Natural killer cell (primary cell): ENCODE measurements at regions of chr21 and their contacts with region 1.

Region 1: GRCh38 chr21:22791986-22792560 is 1793.9 kb downstream of the NCAM2 start:
- DNase-seq: peak in 1 of 2 donors; percentile 60
- ATAC-seq: no peak
- H3K4me3 ChIP-seq: no peak overlapping the region
- H3K4me3 Mint-ChIP-seq: no peak overlapping the region
- H3K27ac ChIP-seq: no peak overlapping the region
- H3K27ac Mint-ChIP-seq: no peak overlapping the region
- H3K4me1 ChIP-seq: no peaks in the 10 kb centered on the region
- H3K4me1 Mint-ChIP-seq: no peaks in the 10 kb centered on the region
- H3K27me3 ChIP-seq: no peaks in the 10 kb centered on the region
- H3K27me3 Mint-ChIP-seq: no peaks in the 10 kb centered on the region
- CTCF ChIP-seq: peak; percentile 66

Region 2: DNA sequence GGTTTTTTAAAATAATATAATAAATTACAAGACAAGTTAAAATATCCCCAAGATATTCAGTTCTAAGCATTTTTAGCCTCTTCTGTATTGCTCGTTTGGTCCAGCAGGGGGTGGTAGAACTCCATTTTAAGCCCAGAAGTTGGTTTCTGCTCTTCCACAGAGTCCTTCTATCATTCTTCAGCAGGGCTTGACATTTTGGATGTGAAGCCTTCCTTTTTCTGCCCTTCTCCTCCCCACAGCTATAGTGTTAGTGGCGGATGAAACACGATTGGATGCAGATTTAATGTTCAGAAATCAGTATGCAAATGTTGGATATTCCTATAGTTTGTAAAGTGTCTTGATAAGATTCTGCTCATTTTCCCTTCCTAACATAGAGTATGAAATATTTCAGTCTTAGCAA is 1792.4 kb before region 1 on chr21:
- intact Hi-C with region 1: loop called (anchors 2 kb)
- DNase-seq: peak; percentile 20 to 45
- ATAC-seq: peak in 1 of 3 donors; percentile 30
- H3K4me3 ChIP-seq: no peak overlapping the region
- H3K4me3 Mint-ChIP-seq: peak overlapping the region; percentile 58
- H3K27ac ChIP-seq: no peak overlapping the region
- H3K27ac Mint-ChIP-seq: no peak overlapping the region
- H3K4me1 ChIP-seq: peaks cover 14% of the 10 kb centered on the region
- H3K4me1 Mint-ChIP-seq: peaks cover 12 to 26% of the 10 kb centered on the region in 2 donors
- H3K27me3 ChIP-seq: peaks cover 9% of the 10 kb centered on the region
- H3K27me3 Mint-ChIP-seq: peaks cover 0 to under 1% of the 10 kb centered on the region in 2 donors
- CTCF ChIP-seq: peak; percentile 69

Region 3: GRCh38 chr21:21163904-21164303 is 1628.2 kb before region 1 on chr21:
- intact Hi-C with region 1: loop called (anchors 5 kb)
- DNase-seq: peak; percentile 20 to 64
- ATAC-seq: peak in 2 of 3 donors; percentile 69 to 81
- H3K4me3 ChIP-seq: no peak overlapping the region
- H3K4me3 Mint-ChIP-seq: no peak overlapping the region
- H3K27ac ChIP-seq: no peak overlapping the region
- H3K27ac Mint-ChIP-seq: no peak overlapping the region
- H3K4me1 ChIP-seq: no peaks in the 10 kb centered on the region
- H3K4me1 Mint-ChIP-seq: no peaks in the 10 kb centered on the region
- H3K27me3 ChIP-seq: no peaks in the 10 kb centered on the region
- H3K27me3 Mint-ChIP-seq: no peaks in the 10 kb centered on the region
- CTCF ChIP-seq: peak; percentile 88

Region 4: GRCh38 chr21:22842875-22843274 is 50.8 kb after region 1 on chr21:
- intact Hi-C with region 1: no loop called
- DNase-seq: no peak
- ATAC-seq: no peak
- H3K4me3 ChIP-seq: no peak overlapping the region
- H3K4me3 Mint-ChIP-seq: no peak overlapping the region
- H3K27ac ChIP-seq: no peak overlapping the region
- H3K27ac Mint-ChIP-seq: no peak overlapping the region
- H3K4me1 ChIP-seq: no peaks in the 10 kb centered on the region
- H3K4me1 Mint-ChIP-seq: no peaks in the 10 kb centered on the region
- H3K27me3 ChIP-seq: no peaks in the 10 kb centered on the region
- H3K27me3 Mint-ChIP-seq: no peaks in the 10 kb centered on the region
- CTCF ChIP-seq: no peak